GM12878 (cell line): ENCODE measurements at regions of chr5 and their contacts with region 1.

Region 1: DNA sequence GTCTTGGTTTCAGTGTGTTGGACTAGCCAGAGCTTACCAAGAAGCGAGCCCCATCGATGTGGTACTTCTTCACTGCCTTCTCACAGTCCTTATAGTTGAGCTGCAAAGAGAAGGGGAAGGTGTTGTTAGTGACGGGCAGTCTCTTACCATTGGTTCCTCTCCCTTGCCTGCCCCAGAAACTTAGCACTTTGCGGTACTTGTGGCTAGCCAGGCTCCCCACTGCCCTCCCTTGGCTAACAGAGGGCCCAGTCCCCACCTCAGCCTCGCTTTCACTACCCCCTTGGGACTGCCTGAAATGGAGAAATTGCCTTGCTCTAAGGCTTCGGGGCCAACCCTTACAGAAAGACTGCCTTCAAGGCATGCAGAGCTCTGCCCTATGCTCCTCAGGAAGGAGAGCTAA is 4.3 kb downstream of the LCP2 start:
- DNase-seq: peak; percentile 87
- ATAC-seq: peak; percentile 86
- H3K4me3 ChIP-seq: peak overlapping the region; percentile 77
- H3K27ac ChIP-seq: no peak overlapping the region
- H3K4me1 ChIP-seq: peaks cover 15% of the 10 kb centered on the region
- H3K27me3 ChIP-seq: no peaks in the 10 kb centered on the region
- CTCF ChIP-seq: peak in 1 of 3 experiments; percentile 19; a peak in 1 of 6 replicates
- EP300 ChIP-seq: peak in 1 of 2 experiments; percentile 80; a peak in 2 of 4 replicates
- POLR2A ChIP-seq: no peak
- RAD21 ChIP-seq: peak; percentile 34; the same call in 1 of the 2 replicates

Region 2: GRCh38 chr5:170312666-170313065 is 19.4 kb after region 1 on chr5:
- CTCF ChIA-PET with region 1: interaction called, 9 read pairs
- POLR2A ChIA-PET with region 1: interaction called, 57 read pairs
- RAD21 ChIA-PET with region 1: interaction called, 68 read pairs
- SMC1A ChIA-PET with region 1: interaction called, 72 read pairs
- in situ Hi-C with region 1: no loop called
- intact Hi-C with region 1: no loop called
- DNase-seq: no peak
- ATAC-seq: peak; percentile 75
- H3K4me3 ChIP-seq: no peak overlapping the region
- H3K27ac ChIP-seq: no peak overlapping the region
- H3K4me1 ChIP-seq: peaks cover 11% of the 10 kb centered on the region
- H3K27me3 ChIP-seq: no peaks in the 10 kb centered on the region
- CTCF ChIP-seq: no peak
- EP300 ChIP-seq: no peak
- POLR2A ChIP-seq: no peak
- RAD21 ChIP-seq: no peak

Region 3: DNA sequence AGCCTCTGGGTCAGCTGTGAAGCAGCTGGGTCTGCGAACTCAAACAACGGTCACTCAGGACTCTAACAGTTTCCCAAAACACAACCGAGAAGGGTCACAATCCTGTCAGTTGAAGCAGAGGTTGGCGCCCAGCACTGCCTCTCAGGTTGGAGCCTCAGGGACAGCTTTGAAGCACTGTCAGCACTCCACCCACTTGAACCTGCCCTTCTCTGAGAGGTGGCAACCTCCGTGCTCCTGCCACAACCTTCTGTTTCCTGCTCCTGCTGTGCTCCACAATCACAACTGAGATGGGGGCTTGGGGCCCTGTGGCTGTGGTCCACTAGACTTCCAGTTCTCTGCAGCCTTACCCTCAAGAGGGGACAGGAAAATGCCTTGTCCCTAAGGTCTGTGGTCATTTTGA is 26.0 kb after region 1 on chr5:
- CTCF ChIA-PET with region 1: interaction called, 9 read pairs
- POLR2A ChIA-PET with region 1: interaction called, 3 read pairs
- RAD21 ChIA-PET with region 1: interaction called, 96 read pairs
- SMC1A ChIA-PET with region 1: interaction called, 31 read pairs
- in situ Hi-C with region 1: no loop called
- intact Hi-C with region 1: no loop called
- DNase-seq: no peak
- ATAC-seq: no peak
- H3K4me3 ChIP-seq: no peak overlapping the region
- H3K27ac ChIP-seq: no peak overlapping the region
- H3K4me1 ChIP-seq: no peaks in the 10 kb centered on the region
- H3K27me3 ChIP-seq: no peaks in the 10 kb centered on the region; a peak in 1 of 4 replicates
- CTCF ChIP-seq: no peak
- EP300 ChIP-seq: no peak
- POLR2A ChIP-seq: no peak
- RAD21 ChIP-seq: no peak

Region 4: GRCh38 chr5:170327168-170327567 is 33.9 kb after region 1 on chr5:
- CTCF ChIA-PET with region 1: interaction called, 134 read pairs
- POLR2A ChIA-PET with region 1: interaction called, 169 read pairs
- RAD21 ChIA-PET with region 1: interaction called, 274 read pairs
- SMC1A ChIA-PET with region 1: interaction called, 274 read pairs
- in situ Hi-C with region 1: no loop called
- intact Hi-C with region 1: loop called (anchors 1 kb)
- DNase-seq: no peak
- ATAC-seq: peak; percentile 50
- H3K4me3 ChIP-seq: peak overlapping the region; percentile 33; the same call in 1 of the 2 replicates
- H3K27ac ChIP-seq: peak overlapping the region; percentile 1; the same call in 1 of the 2 replicates
- H3K4me1 ChIP-seq: peaks cover 36% of the 10 kb centered on the region
- H3K27me3 ChIP-seq: no peaks in the 10 kb centered on the region
- CTCF ChIP-seq: no peak
- EP300 ChIP-seq: no peak
- POLR2A ChIP-seq: no peak
- RAD21 ChIP-seq: no peak

Region 5: DNA sequence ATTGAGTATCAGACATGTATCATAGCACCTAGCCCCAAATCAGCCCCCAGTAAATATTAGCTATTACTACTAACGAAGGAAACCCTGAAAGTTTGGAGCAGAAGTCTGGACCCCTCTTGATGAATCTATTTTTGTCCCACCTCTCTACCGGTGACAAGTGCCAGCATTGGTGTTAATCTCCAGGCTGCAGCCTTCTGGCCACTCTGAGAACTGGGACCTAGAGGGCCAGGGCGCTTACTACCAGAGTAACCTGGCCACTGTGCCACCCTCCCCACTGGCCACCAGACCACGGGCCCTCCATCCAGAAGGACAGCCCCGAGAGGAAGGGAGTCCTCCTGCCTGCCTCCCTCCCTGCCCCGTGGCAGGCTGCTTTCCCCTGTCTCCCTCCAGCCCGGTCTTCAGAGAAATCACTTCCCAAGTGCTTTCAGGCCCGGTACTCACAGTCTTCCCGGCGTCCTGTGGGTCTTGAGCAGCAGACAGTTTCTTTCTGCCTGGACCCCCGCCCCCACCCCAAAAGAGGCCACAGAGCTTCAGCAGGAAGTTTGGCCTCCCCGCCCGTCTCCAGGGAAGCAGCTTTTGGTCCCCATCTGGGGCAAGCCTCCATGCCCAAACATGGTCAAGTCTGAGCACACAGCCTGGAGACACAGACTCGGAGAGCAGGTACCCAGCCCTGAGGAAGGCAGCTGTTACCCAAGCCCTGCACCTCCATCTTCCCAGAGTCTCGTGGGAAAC is 95.7 kb after region 1 on chr5 and contains the start of gene KCNMB1:
- CTCF ChIA-PET with region 1: interaction called, 5 read pairs
- POLR2A ChIA-PET with region 1: interaction called, 4 read pairs
- RAD21 ChIA-PET with region 1: interaction called, 12 read pairs
- SMC1A ChIA-PET with region 1: interaction called, 3 read pairs
- in situ Hi-C with region 1: no loop called
- intact Hi-C with region 1: no loop called
- DNase-seq: no peak
- ATAC-seq: peak; percentile 57
- H3K4me3 ChIP-seq: peak within 1 kb of the TSS; percentile 5; the same call in 1 of the 2 replicates
- H3K27ac ChIP-seq: peak within 1 kb of the TSS; percentile 22; the same call in 1 of the 2 replicates
- H3K4me1 ChIP-seq: peaks cover 20% of the 10 kb centered on the region
- H3K27me3 ChIP-seq: no peaks in the 10 kb centered on the region
- CTCF ChIP-seq: no peak
- EP300 ChIP-seq: no peak
- POLR2A ChIP-seq: no peak
- RAD21 ChIP-seq: no peak
- polyA plus RNA-seq, gene KCNMB1: 2.3 to 2.8 TPM